Activated T-helper 1 cell treated with anti-CD3 and anti-CD28 coated beads, Interleukin-12 subunit alpha, Interleukin-12 subunit beta, Interleukin-2, Interleukin-4 antibody, amounts not matched to agents 30 ng/mL and 10 ng/mL and 1 ng/mL, durations not matched to agents 14 hours and 24 hours and 36 hours (primary cell): ENCODE measurements at regions of chr4 and their contacts with region 1.

Region 1: DNA sequence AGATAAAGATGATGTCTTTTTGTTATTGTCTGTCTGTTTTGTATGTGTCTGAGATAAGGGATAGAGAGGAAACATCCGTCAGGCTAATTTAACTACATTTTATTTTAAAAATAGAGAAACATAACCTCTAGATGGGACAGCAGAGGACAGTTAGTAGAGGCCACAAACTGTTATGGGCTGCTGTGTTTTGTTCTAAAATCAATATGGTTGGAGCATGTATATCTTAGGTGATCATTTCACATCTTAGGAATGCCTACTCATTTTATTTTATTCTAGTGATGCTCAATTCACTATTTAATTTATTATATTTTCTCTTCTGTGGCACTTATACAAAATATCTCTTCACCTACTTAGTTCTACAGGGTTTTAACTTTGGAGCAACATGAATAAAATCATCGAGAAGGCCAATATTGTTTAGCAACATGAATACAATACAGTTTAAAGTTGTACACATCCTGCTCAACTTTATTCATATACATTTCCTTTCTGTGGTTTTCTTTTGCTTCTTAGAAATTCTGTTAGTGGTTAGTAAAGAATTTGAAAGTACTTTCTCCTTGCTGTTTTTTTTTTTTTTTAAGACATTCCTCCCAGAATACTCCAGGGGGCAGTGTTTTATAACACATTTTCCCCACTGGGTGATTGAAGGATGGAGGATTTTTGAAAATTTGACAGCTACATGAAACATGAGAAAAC is 392.9 kb downstream of the UNC5C start:
- DNase-seq: no peak
- H3K4me3 Mint-ChIP-seq: peak overlapping the region; percentile 55
- H3K27ac Mint-ChIP-seq: peak overlapping the region; percentile 77
- H3K4me1 Mint-ChIP-seq: peaks cover 14% of the 10 kb centered on the region
- H3K27me3 Mint-ChIP-seq: peaks cover 29% of the 10 kb centered on the region

Region 2: GRCh38 chr4:95268819-95269565 is 113.1 kb after region 1 on chr4:
- intact Hi-C with region 1: no loop called
- DNase-seq: no peak
- H3K4me3 Mint-ChIP-seq: no peak overlapping the region
- H3K27ac Mint-ChIP-seq: no peak overlapping the region
- H3K4me1 Mint-ChIP-seq: no peaks in the 10 kb centered on the region
- H3K27me3 Mint-ChIP-seq: no peaks in the 10 kb centered on the region

Region 3: GRCh38 chr4:96352051-96352517 is 1196.2 kb after region 1 on chr4:
- intact Hi-C with region 1: loop called (anchors 5 kb)
- DNase-seq: no peak
- H3K4me3 Mint-ChIP-seq: no peak overlapping the region
- H3K27ac Mint-ChIP-seq: no peak overlapping the region
- H3K4me1 Mint-ChIP-seq: no peaks in the 10 kb centered on the region
- H3K27me3 Mint-ChIP-seq: no peaks in the 10 kb centered on the region

Region 4: GRCh38 chr4:97153042-97153441 is 1997.1 kb after region 1 on chr4:
- intact Hi-C with region 1: loop called (anchors 5 kb)
- DNase-seq: no peak
- H3K4me3 Mint-ChIP-seq: no peak overlapping the region
- H3K27ac Mint-ChIP-seq: no peak overlapping the region
- H3K4me1 Mint-ChIP-seq: no peaks in the 10 kb centered on the region
- H3K27me3 Mint-ChIP-seq: no peaks in the 10 kb centered on the region